ENCODE measurements at regions of chr18 and their contacts with region 1.

Region 1: GRCh38 chr18:62714671-62715435 is 488 bp upstream of the PHLPP1 start:
- DNase-seq: peak; percentile 93
- ATAC-seq: peak; percentile 83
- H3K4me3 ChIP-seq: peak overlapping the region; percentile 79
- H3K27ac ChIP-seq: no peak overlapping the region
- H3K4me1 ChIP-seq: 0 out of 2 replicates have a peak, but pooled peaks cover 2% of the 10 kb centered on the region
- H3K27me3 ChIP-seq: no peaks in the 10 kb centered on the region
- CTCF ChIP-seq: peak; percentile 73 to 86 (median 78)
- EP300 ChIP-seq: peak in 1 of 2 experiments; percentile 31; a peak in 1 of 4 replicates
- POLR2A ChIP-seq: no peak; the same call in 1 of the 2 replicates
- RAD21 ChIP-seq: peak; percentile 79

Region 2: DNA sequence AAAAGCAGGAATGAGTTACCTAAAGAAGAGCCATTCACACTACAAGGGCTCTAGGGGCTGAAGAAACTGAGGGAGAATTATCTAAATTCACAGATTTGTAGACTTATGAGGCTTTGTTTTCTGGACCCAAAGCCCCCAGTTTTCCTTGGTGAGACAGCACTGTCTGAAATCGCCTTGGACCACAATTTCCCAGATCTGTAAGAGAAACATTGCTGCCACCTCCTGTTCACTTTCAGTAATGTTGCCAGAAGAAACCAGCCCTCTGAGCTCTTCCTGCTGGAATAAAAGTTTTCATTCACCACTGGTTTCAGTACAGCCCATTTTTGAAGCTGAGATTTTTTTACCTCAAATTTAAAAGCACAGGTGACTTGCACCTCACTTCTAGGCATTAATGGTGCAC is 1212.4 kb before region 1 on chr18:
- CTCF ChIA-PET with region 1: no interaction called
- POLR2A ChIA-PET with region 1: no interaction called
- RAD21 ChIA-PET with region 1: no interaction called
- SMC1A ChIA-PET with region 1: no interaction called
- in situ Hi-C with region 1: no loop called
- intact Hi-C with region 1: no loop called
- DNase-seq: peak; percentile 5
- ATAC-seq: peak; percentile 66
- H3K4me3 ChIP-seq: no peak overlapping the region
- H3K27ac ChIP-seq: no peak overlapping the region
- H3K4me1 ChIP-seq: no peaks in the 10 kb centered on the region
- H3K27me3 ChIP-seq: no peaks in the 10 kb centered on the region
- CTCF ChIP-seq: peak; percentile 57 to 64 (median 61); a peak in 5 of 6 replicates
- EP300 ChIP-seq: no peak
- POLR2A ChIP-seq: no peak
- RAD21 ChIP-seq: peak; percentile 71

Region 3: GRCh38 chr18:62510789-62511188 is 204.1 kb before region 1 on chr18:
- CTCF ChIA-PET with region 1: no interaction called
- POLR2A ChIA-PET with region 1: no interaction called
- RAD21 ChIA-PET with region 1: no interaction called
- SMC1A ChIA-PET with region 1: no interaction called
- in situ Hi-C with region 1: no loop called
- intact Hi-C with region 1: no loop called
- DNase-seq: no peak
- ATAC-seq: no peak
- H3K4me3 ChIP-seq: no peak overlapping the region
- H3K27ac ChIP-seq: no peak overlapping the region
- H3K4me1 ChIP-seq: peaks cover 8% of the 10 kb centered on the region
- H3K27me3 ChIP-seq: no peaks in the 10 kb centered on the region; a peak in 1 of 4 replicates
- CTCF ChIP-seq: no peak
- EP300 ChIP-seq: no peak
- POLR2A ChIP-seq: no peak
- RAD21 ChIP-seq: no peak

Region 4: DNA sequence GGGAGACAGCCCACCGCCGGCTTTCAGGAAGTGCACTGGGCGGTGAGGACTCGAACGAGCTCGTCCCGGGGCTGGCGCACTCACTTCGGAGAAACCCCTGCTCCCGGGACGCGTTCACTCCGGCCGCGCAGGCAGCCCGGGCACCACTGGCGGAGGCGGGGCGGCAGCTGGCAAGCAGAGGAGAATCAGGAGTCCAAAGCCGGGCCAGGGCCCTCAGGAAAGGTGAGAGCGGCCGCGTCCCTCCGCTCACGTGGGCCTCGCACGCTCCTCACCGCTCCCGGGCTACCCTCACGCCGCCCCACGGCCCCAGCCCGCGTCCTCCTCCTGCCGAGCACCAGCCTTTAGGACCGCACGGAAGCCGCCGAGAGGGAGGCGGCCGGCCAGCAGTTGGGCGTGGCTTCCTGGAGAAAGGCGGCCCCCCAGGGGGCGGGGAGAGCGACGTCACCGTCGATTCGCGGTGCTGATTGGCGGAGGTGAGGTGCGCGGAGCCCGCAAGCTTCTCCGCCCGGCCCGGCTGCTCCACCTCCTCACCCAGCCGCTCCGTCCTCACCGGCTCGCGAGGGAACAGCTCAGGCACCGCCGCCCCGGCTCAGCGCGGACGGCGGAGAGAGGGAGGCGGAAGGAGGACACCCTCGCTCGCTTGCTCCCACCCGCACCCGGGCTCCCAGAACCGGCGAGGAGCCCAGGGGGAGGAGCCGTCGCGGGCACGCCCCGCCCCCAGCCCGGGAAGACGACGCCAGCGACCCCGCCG is 192.2 kb before region 1 on chr18 and contains the start of gene ZCCHC2:
- CTCF ChIA-PET with region 1: no interaction called
- POLR2A ChIA-PET with region 1: no interaction called
- RAD21 ChIA-PET with region 1: no interaction called
- SMC1A ChIA-PET with region 1: no interaction called
- in situ Hi-C with region 1: no loop called
- intact Hi-C with region 1: loop called (anchors 10 kb)
- DNase-seq: peak; percentile 90
- ATAC-seq: peak; percentile 75
- H3K4me3 ChIP-seq: peak within 1 kb of the TSS; percentile 74
- H3K27ac ChIP-seq: peak within 1 kb of the TSS; percentile 66
- H3K4me1 ChIP-seq: no peaks in the 10 kb centered on the region
- H3K27me3 ChIP-seq: peaks cover 0 to 3% of the 10 kb centered on the region in 2 experiments; a peak in 2 of 4 replicates
- CTCF ChIP-seq: no peak
- EP300 ChIP-seq: no peak
- POLR2A ChIP-seq: peak; percentile 90
- RAD21 ChIP-seq: no peak
- polyA plus RNA-seq, gene ZCCHC2: 1.7 to 2.7 TPM

Region 5: GRCh38 chr18:62957885-62958472 is 243.1 kb after region 1 on chr18:
- CTCF ChIA-PET with region 1: interaction called, 57 read pairs
- POLR2A ChIA-PET with region 1: interaction called, 6 read pairs
- RAD21 ChIA-PET with region 1: interaction called, 48 read pairs
- SMC1A ChIA-PET with region 1: interaction called, 36 read pairs
- in situ Hi-C with region 1: loop called (anchors 10 kb)
- intact Hi-C with region 1: loop called (anchors 1 kb)
- DNase-seq: no peak
- ATAC-seq: peak; percentile 99
- H3K4me3 ChIP-seq: no peak overlapping the region
- H3K27ac ChIP-seq: no peak overlapping the region
- H3K4me1 ChIP-seq: no peaks in the 10 kb centered on the region
- H3K27me3 ChIP-seq: no peaks in the 10 kb centered on the region
- CTCF ChIP-seq: peak; percentile 38 to 45 (median 43); a peak in 5 of 6 replicates
- EP300 ChIP-seq: no peak
- POLR2A ChIP-seq: no peak
- RAD21 ChIP-seq: peak; percentile 60

Region 6: GRCh38 chr18:63074981-63075404 is 360.1 kb after region 1 on chr18:
- CTCF ChIA-PET with region 1: no interaction called
- POLR2A ChIA-PET with region 1: no interaction called
- RAD21 ChIA-PET with region 1: no interaction called
- SMC1A ChIA-PET with region 1: no interaction called
- in situ Hi-C with region 1: no loop called
- intact Hi-C with region 1: loop called (anchors 10 kb)
- DNase-seq: no peak
- ATAC-seq: peak; percentile 40
- H3K4me3 ChIP-seq: peak overlapping the region; percentile 45; the same call in 1 of the 2 replicates
- H3K27ac ChIP-seq: peak overlapping the region; percentile 60
- H3K4me1 ChIP-seq: peaks cover 17% of the 10 kb centered on the region
- H3K27me3 ChIP-seq: no peaks in the 10 kb centered on the region
- CTCF ChIP-seq: no peak
- EP300 ChIP-seq: no peak
- POLR2A ChIP-seq: peak; percentile 76
- RAD21 ChIP-seq: no peak

Region 7: DNA sequence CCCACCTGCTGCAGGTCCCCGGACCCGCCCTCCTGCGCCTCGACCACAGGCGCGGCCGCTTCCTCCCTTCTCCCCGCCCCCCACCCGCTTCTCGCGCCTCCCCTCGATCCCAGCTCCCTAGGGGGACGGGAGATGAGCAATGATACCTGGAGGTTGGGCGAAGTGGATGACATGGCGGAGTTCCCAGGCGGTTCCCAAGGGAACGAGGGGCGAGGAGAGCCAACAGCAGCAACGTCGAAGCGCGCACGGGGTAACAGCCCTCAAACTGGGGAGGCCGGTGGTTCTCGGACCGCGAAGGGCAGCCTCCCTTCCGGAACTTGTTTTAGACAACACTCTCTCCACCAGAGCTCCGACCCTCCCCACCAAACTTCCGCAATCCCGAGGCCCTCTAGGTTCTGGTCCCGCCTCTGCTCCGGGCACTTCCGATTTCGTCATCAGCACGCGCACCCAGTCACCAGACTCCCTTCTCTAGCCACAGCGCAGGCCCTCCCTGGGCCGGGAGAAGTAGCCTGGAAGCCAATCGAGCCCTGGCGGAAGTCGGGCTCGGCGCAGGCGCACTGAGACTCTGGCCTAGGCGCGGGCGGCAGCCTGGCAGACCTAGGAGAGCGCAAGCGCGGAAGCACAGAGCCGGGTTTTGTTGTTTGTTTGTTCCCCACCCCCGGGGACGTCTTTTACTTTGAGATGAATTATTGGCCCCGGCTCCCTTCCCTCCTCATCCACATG is 707.4 kb after region 1 on chr18 and contains the start of gene VPS4B:
- CTCF ChIA-PET with region 1: no interaction called
- POLR2A ChIA-PET with region 1: interaction called, 3 read pairs
- RAD21 ChIA-PET with region 1: no interaction called
- SMC1A ChIA-PET with region 1: no interaction called
- in situ Hi-C with region 1: loop called (anchors 10 kb)
- intact Hi-C with region 1: no loop called
- DNase-seq: peak; percentile 98
- ATAC-seq: peak; percentile 97
- H3K4me3 ChIP-seq: peak within 1 kb of the TSS; percentile 90
- H3K27ac ChIP-seq: peak within 1 kb of the TSS; percentile 94
- H3K4me1 ChIP-seq: no peaks in the 10 kb centered on the region
- H3K27me3 ChIP-seq: no peaks in the 10 kb centered on the region
- CTCF ChIP-seq: no peak
- EP300 ChIP-seq: no peak
- POLR2A ChIP-seq: peak; percentile 90
- RAD21 ChIP-seq: no peak
- polyA plus RNA-seq, gene VPS4B: 25.7 to 29.9 TPM